GM18951 (cell line): ENCODE measurements at regions of chr15 and their contacts with region 1.

Region 1: GRCh38 chr15:89430530-89431341 is 65.6 kb downstream of the RHCG start:
- POLR2A ChIP-seq: no peak

Region 2: DNA sequence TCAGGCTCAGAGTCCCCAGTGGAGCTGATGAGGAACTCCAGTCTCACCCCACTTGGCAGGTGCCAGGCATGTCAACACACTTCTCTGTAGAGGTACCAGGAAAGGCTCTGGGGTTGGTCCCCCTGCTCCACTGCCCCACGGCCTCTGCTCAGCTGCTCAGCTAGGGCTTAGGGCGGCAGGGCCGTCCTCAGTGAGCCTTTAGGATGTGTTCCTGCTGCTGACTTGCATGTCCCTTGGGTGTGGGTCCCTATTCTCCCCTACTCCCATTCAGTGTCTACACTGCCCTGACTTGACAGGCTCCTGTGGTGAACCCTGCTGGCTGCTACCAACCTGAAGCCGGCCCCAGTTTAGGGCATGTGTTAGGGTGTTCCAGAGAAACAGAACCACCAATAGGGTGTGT is 78.3 kb before region 1 on chr15:
- in situ Hi-C with region 1: loop called (anchors 5 kb)
- POLR2A ChIP-seq: no peak